Adrenal gland (tissue), 19 donors: ENCODE measurements at regions of chr13 and their contacts with region 1.

Region 1: DNA sequence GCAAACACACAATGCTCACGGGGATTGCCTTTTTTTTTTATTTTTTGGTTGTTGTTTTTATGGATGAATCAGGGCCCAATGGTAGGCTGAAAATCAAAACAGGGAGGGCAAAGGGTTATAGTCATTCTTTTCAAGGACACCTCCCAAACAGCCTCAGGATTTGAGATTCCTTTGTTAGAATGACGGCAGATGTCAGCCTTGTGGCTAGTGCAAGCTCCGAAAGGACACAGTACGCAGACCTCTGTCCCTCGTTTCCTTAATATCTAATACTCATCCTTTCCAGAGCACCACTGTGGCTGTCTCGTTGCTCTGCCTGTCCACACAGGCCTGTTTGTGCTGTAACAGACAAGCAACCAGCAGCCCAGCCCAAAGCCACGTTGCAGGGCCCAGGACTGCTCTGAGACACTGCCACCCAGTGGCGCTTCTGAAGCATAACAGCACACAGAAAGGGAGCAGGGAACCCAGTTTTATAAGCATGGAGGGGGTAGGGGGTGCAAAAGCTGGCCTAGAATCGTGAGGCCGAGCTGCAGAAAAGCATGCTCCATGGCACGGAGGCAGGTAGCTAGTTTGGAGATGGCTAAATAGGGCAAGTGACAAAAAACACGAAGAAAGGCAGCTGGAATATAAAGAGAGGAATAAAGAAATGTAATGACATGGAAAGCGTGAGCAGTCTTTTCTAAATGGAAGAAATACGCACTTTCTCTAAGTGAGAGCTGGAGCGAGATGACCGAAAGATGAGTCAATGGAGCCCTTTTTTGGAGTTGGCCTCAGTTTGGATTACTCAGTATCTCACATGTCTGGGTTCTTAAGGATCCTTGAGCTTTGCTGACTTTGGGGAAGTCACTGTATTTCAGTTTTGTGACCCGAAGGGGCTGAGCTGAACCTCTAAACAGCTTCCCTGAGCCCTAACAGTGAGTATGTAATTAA is 40.7 kb upstream of the MEDAG start:
- DNase-seq: peak; percentile 74 to 94 (median 88)
- H3K4me3 ChIP-seq: no peak overlapping the region
- H3K27ac ChIP-seq: peak overlapping the region; percentile 77 to 94 (median 86)
- H3K4me1 ChIP-seq: peaks cover 19 to 35% of the 10 kb centered on the region in 2 donors
- H3K27me3 ChIP-seq: no peaks in the 10 kb centered on the region
- CTCF ChIP-seq: peak; percentile 84 to 99 (median 94)
- POLR2A ChIP-seq: peak in 1 of 2 donors; percentile 58

Region 2: DNA sequence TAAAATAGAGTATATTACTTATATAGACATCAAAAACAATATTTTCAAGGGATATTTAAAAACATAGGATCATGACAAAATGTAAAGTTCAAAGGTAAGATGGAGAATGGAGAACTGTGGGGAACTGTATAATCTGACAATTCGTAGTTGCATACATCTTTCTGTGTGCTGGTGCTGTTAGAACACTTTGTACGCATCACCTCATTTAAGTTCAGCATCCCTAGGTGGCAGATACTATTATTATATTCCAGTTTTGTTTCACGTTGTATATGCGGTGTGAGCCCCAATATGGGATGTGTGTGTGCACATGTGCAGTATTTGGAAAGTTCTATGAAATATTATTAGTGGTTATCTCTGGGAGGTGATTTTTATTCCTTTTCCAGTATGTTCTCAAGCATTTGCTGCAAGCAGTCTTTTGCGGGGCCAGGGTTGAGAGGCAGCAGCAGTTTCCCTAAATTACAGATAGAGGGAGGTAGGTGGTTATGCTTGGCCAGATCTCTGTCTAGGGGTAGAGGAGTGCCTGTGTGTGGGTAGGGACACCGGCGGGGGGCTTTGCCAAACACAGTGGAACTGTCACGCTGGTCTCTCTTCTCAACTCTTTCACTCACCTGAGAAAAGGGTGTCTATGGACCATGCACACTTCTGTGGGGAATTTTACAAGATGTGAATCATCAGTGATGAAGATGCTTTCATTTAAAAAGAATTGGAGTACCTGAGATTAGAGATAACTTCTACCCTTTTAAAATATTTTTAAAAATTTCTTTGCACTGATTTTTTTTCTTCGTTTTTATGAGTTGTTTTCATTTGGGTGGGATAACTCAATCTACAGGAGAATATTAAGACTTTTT is 185.7 kb before region 1 on chr13:
- intact Hi-C with region 1: loop called in 1 of 2 experiments (anchors 10 kb)
- DNase-seq: no peak
- H3K4me3 ChIP-seq: no peak overlapping the region
- H3K27ac ChIP-seq: no peak overlapping the region
- H3K4me1 ChIP-seq: no peaks in the 10 kb centered on the region
- H3K27me3 ChIP-seq: no peaks in the 10 kb centered on the region
- CTCF ChIP-seq: peak; percentile 37 to 58 (median 52)
- POLR2A ChIP-seq: no peak

Region 3: DNA sequence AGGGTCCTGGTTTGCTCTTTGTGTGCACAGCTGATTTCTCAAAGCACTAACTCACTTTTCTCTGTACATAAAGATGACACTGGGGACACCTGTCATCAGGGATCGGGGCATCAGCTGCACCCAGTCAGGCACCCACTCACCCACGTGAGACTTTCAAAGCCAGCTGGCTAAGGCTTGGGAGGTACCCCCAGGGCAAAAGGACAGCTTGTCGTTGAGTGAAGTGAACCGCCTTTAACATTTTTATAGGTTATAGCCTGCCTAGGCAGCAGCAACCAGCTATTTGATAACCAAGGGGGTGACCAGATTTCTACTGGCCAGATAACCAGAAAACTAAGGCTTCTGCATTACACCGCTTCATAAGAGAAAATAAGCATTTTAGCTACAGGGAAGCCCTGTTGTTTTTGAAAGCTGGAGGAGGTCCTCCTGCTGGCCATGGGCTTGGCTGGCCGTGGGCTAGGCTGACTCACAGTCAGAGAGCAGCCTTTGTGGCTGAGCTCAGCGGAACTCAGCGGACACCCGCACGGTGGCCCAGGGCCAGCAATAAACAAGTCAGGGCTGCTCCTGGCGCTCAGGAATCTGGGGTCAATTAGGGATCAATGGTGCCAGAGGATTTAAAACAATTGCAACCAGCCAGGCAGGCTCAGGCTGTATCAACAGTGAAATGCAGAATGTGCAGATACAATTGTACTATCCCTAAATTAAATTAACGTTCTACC is 72.9 kb before region 1 on chr13:
- intact Hi-C with region 1: loop called in 1 of 2 experiments (anchors 5 kb)
- DNase-seq: peak; percentile 84 to 96 (median 92)
- H3K4me3 ChIP-seq: no peak overlapping the region
- H3K27ac ChIP-seq: peak overlapping the region in 3 of 5 donors; percentile 39 to 69 (median 40)
- H3K4me1 ChIP-seq: peaks cover 11 to 31% of the 10 kb centered on the region in 2 donors
- H3K27me3 ChIP-seq: no peaks in the 10 kb centered on the region
- CTCF ChIP-seq: peak in 5 of 6 experiments; percentile 41 to 58 (median 46)
- POLR2A ChIP-seq: no peak